Ovary (tissue), 10 donors: ENCODE measurements at regions of chrX and their contacts with region 1.

Region 1: DNA sequence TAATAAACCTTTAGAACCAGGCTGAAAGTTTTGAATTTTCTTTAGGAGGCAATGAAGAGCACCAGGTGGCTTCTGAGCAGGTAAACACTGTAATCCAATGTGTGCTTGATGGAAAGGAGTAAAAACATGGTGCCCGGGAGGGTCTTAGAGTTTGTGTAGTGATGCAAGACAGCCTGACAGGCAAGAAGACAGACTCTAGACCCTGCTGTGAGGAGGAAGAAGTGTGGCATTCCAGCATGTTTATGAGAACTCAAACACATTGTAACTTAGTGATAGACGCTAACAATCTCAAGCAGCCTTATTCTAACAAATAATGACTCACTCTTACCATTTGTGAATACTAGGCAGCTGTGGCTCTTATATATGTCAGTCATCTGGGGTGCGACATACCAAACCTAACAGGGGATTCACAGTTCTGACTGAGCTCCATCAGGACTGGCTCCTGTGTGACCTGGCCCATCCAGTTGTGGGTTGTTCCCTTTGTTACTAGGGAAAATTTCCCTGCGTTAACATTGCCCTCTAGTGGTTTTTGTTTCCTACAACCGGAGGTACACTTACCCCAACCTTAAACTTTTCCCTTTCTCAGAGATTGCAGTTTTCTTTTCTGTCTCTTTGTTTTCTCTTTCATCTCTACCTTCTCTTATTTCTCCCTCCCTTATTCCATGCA is 53.8 kb downstream of the VSIG4 start:
- DNase-seq: peak in 1 of 5 donors; percentile 17
- H3K4me3 ChIP-seq: no peak overlapping the region
- H3K27ac ChIP-seq: no peak overlapping the region
- H3K4me1 ChIP-seq: no peaks in the 10 kb centered on the region
- H3K27me3 ChIP-seq: no peaks in the 10 kb centered on the region
- CTCF ChIP-seq: peak in 1 of 3 donors; percentile 24
- EP300 ChIP-seq: no peak
- POLR2A ChIP-seq: no peak

Region 2: GRCh38 chrX:65581661-65582339 is 404.3 kb before region 1 on chrX:
- intact Hi-C with region 1: loop called in 3 of 4 experiments (anchors 2 to 5 kb)
- DNase-seq: peak; percentile 38 to 74 (median 58)
- H3K4me3 ChIP-seq: no peak overlapping the region
- H3K27ac ChIP-seq: no peak overlapping the region
- H3K4me1 ChIP-seq: no peaks in the 10 kb centered on the region
- H3K27me3 ChIP-seq: no peaks in the 10 kb centered on the region
- CTCF ChIP-seq: peak; percentile 32 to 74 (median 69)
- EP300 ChIP-seq: no peak
- POLR2A ChIP-seq: no peak